Calu3 (cell line): ENCODE measurements at regions of chr12 and their contacts with region 1.

Region 1: GRCh38 chr12:123141615-123142517 is 9.0 kb downstream of the PITPNM2 start:
- DNase-seq: peak; percentile 43
- H3K4me3 Mint-ChIP-seq: no peak overlapping the region
- H3K27ac Mint-ChIP-seq: no peak overlapping the region
- H3K4me1 Mint-ChIP-seq: peaks cover 38% of the 10 kb centered on the region
- H3K27me3 Mint-ChIP-seq: no peaks in the 10 kb centered on the region
- CTCF ChIP-seq: no peak

Region 2: GRCh38 chr12:123050331-123050831 is 91.5 kb before region 1 on chr12:
- CTCF ChIA-PET with region 1: interaction called, 11 read pairs
- intact Hi-C with region 1: no loop called
- DNase-seq: no peak
- H3K4me3 Mint-ChIP-seq: no peak overlapping the region
- H3K27ac Mint-ChIP-seq: no peak overlapping the region
- H3K4me1 Mint-ChIP-seq: no peaks in the 10 kb centered on the region
- H3K27me3 Mint-ChIP-seq: no peaks in the 10 kb centered on the region
- CTCF ChIP-seq: no peak

Region 3: DNA sequence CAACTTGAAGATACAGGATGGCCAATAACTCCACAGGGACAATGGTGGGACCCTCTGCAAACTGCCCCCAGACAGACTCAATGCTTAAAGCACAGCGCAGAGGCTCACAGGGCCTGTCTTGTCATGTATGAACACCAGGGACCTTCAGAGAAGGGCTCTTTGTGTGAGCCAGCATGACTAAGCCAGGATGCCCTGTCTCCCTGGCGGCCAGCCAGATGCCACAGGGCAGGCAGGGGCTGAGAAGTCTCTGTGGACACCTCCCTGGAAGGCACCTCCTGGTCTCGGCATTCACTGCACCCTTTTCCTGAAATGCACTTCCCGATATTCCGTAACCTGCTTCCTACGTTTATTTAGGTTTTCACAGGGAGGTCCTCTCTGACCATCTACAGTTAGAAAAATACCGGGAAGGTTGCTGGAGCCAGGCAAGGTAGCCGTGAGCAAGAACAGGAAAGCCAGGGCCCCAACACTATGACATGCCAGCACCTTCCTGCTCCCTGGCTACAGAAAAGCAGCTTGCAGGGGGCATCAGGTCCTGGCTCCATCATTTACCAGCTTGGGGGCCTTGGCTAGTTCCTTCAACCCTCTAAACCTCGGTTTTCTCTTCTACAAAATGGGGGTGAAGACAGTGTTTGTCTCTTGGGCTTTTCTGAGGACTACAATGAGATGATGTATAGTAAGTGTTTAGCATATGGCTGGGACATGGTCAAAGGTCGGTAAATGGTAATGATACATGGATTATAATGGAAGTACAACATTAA is 56.0 kb before region 1 on chr12:
- CTCF ChIA-PET with region 1: interaction called, 3 read pairs
- intact Hi-C with region 1: loop called (anchors 5 kb)
- DNase-seq: peak; percentile 95
- H3K4me3 Mint-ChIP-seq: no peak overlapping the region
- H3K27ac Mint-ChIP-seq: peak overlapping the region; percentile 23
- H3K4me1 Mint-ChIP-seq: peaks cover 64% of the 10 kb centered on the region
- H3K27me3 Mint-ChIP-seq: no peaks in the 10 kb centered on the region
- CTCF ChIP-seq: no peak

Region 4: GRCh38 chr12:123180171-123180570 is 38.3 kb after region 1 on chr12:
- CTCF ChIA-PET with region 1: no interaction called
- intact Hi-C with region 1: no loop called
- DNase-seq: no peak
- H3K4me3 Mint-ChIP-seq: no peak overlapping the region
- H3K27ac Mint-ChIP-seq: no peak overlapping the region
- H3K4me1 Mint-ChIP-seq: no peaks in the 10 kb centered on the region
- H3K27me3 Mint-ChIP-seq: no peaks in the 10 kb centered on the region
- CTCF ChIP-seq: no peak